ENCODE measurements at regions of chr7 and their contacts with region 1.

Region 1: GRCh38 chr7:117119192-117119924 is 166.1 kb downstream of the ST7 start:
- DNase-seq: peak; percentile 72
- ATAC-seq: peak; percentile 88
- H3K4me3 ChIP-seq: no peak overlapping the region
- H3K27ac ChIP-seq: no peak overlapping the region
- H3K4me1 ChIP-seq: peaks cover 1% of the 10 kb centered on the region
- H3K27me3 ChIP-seq: no peaks in the 10 kb centered on the region
- CTCF ChIP-seq: peak; percentile 85

Region 2: DNA sequence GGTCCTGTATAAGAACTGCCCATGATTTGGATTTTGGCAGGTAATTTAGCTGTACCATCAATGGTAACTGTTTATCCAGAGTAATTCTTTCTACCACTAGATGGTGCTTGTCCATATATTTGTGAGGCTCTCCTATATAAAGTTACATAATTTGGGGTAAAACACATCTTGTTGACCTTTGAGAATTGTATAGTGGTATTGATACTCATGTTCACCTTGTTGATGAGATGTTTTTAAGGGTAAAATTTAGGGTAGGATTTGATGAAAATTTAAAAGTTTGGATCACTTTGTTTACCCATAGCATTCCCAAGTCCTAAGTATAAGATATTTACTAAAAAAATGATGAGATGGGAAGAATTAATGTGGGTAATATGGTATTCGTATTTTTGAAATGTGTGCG is 134.4 kb before region 1 on chr7:
- intact Hi-C with region 1: loop called (anchors 10 kb)
- DNase-seq: no peak
- ATAC-seq: peak; percentile 64
- H3K4me3 ChIP-seq: no peak overlapping the region
- H3K27ac ChIP-seq: no peak overlapping the region
- H3K4me1 ChIP-seq: no peaks in the 10 kb centered on the region
- H3K27me3 ChIP-seq: no peaks in the 10 kb centered on the region
- CTCF ChIP-seq: peak; percentile 70

Region 3: DNA sequence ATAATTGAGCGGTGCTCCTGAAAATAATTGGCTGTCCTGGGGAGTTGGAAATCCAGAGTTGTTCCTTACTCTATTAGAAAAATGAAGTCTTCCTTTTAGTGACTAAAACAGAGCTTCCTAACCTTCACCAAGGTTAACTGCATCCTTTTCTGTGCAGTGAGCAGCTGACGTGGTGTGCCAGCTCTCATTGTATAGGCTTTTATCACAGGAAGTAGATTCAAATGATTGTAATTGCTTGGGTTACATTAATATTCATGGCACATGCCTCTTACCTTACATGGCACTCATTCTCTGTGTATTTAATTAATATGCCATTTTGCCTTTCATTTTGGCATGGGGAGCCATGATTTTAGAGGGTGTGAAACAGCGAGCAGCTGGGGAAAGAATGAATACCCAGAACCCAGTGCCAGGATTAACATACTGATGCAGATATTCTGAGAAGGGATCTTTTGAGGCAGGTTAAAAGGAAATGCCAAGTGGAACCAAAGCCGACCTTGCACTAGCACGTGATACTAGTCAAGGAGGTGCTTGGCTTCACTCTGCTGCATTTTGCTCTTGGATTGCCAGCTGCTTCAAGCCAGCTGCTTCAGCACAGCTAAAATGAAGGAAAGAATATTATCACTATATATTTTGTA is 50.7 kb before region 1 on chr7:
- intact Hi-C with region 1: no loop called
- DNase-seq: no peak
- ATAC-seq: peak; percentile 57
- H3K4me3 ChIP-seq: no peak overlapping the region
- H3K27ac ChIP-seq: no peak overlapping the region
- H3K4me1 ChIP-seq: peaks cover 30% of the 10 kb centered on the region
- H3K27me3 ChIP-seq: no peaks in the 10 kb centered on the region
- CTCF ChIP-seq: no peak

Region 4: DNA sequence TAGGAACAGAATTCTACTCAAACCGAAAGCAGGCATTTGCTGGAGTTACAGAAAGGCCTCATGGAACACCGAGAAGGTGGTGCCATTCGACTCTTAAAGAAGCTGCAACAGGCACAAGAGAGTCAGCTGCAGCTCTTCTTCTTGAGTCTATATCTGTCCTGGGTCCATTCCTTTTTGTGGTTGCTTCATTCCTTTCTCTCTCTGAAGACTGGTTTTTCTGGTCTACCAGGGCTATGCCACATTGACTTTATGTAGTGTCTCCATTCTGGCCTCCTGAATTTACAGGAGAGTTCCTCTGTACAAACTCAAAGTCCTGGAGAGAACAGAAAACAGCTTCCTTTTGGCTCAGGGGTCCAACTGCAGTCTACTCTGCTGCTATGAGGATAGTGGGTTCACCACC is 493.3 kb after region 1 on chr7:
- intact Hi-C with region 1: no loop called
- DNase-seq: no peak
- ATAC-seq: no peak
- H3K4me3 ChIP-seq: no peak overlapping the region
- H3K27ac ChIP-seq: no peak overlapping the region
- H3K4me1 ChIP-seq: no peaks in the 10 kb centered on the region
- H3K27me3 ChIP-seq: no peaks in the 10 kb centered on the region
- CTCF ChIP-seq: no peak